IMR-90 (cell line): ENCODE measurements at regions of chr1 and their contacts with region 1.

Region 1: DNA sequence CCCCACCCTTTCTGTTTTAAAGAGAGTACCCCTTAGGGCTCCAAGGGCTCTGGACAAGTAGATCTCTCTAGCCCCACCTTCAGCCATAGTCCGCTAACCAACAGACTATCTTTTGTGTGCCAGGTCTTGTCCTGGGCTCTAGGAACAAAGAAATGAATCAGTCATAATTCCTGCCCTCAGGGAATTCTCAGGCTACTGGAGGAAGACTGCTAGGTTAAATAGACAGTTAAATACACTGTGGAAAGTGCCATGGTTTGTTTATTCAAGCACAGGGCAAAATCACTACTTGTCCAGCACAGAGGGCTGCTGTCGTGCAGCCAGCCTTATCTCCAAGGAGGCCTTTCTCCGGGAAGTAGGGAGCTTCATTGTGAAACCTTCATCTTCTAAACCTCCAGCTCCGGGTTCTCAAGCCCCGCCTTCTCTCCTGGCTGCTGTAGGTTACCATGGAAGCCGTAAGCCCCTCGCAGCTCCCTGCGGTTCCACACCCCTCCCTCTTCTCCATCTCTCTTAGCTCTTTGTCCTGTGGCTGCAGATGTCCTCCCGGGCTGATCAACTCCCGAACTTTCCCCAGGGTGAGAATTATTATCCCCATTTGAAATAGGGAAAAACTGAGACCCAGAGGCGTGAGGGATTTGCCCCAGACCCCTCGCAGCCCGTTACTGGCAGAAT is 29.8 kb downstream of the SHISAL2A start:
- DNase-seq: peak; percentile 52
- ATAC-seq: peak; percentile 90
- H3K4me3 ChIP-seq: no peak overlapping the region
- H3K27ac ChIP-seq: no peak overlapping the region
- H3K4me1 ChIP-seq: peaks cover 8% of the 10 kb centered on the region; the same call in 1 of the 2 replicates
- H3K27me3 ChIP-seq: peaks cover 7% of the 10 kb centered on the region; the same call in 1 of the 2 replicates
- CTCF ChIP-seq: no peak
- POLR2A ChIP-seq: no peak
- RAD21 ChIP-seq: no peak

Region 2: GRCh38 chr1:52534928-52535764 is 127.6 kb before region 1 on chr1:
- CTCF ChIA-PET with region 1: no interaction called
- POLR2A ChIA-PET with region 1: no interaction called
- dilution Hi-C with region 1: no loop called
- in situ Hi-C with region 1: no loop called
- intact Hi-C with region 1: loop called (anchors 5 kb)
- DNase-seq: peak; percentile 83
- ATAC-seq: no peak; the same call in 1 of the 2 replicates
- H3K4me3 ChIP-seq: no peak overlapping the region
- H3K27ac ChIP-seq: no peak overlapping the region
- H3K4me1 ChIP-seq: no peaks in the 10 kb centered on the region
- H3K27me3 ChIP-seq: no peaks in the 10 kb centered on the region
- CTCF ChIP-seq: no peak
- POLR2A ChIP-seq: no peak
- RAD21 ChIP-seq: no peak

Region 3: GRCh38 chr1:52629325-52629643 is 33.5 kb before region 1 on chr1:
- CTCF ChIA-PET with region 1: no interaction called
- POLR2A ChIA-PET with region 1: no interaction called
- dilution Hi-C with region 1: no loop called
- in situ Hi-C with region 1: no loop called
- intact Hi-C with region 1: loop called (anchors 5 kb)
- DNase-seq: no peak
- ATAC-seq: peak; percentile 39; the same call in 1 of the 2 replicates
- H3K4me3 ChIP-seq: no peak overlapping the region
- H3K27ac ChIP-seq: no peak overlapping the region
- H3K4me1 ChIP-seq: peaks cover 5% of the 10 kb centered on the region
- H3K27me3 ChIP-seq: peaks cover 44% of the 10 kb centered on the region
- CTCF ChIP-seq: no peak
- POLR2A ChIP-seq: no peak
- RAD21 ChIP-seq: no peak